CD4-positive, alpha-beta T cell (primary cell): ENCODE measurements at regions of chr20 and their contacts with region 1.

Region 1: GRCh38 chr20:17968366-17969279 is at the starts of genes MGME1 and SNX5:
- DNase-seq: peak; percentile 96 to 100 (median 98)
- ATAC-seq: peak; percentile 91
- H3K4me3 ChIP-seq: peak within 1 kb of the TSS; percentile 69
- H3K4me3 Mint-ChIP-seq: peak within 1 kb of the TSS; percentile 97
- H3K27ac ChIP-seq: peak within 1 kb of the TSS; percentile 92 to 99
- H3K27ac Mint-ChIP-seq: peak within 1 kb of the TSS; percentile 92
- H3K4me1 ChIP-seq: peaks cover 46% of the 10 kb centered on the region
- H3K4me1 Mint-ChIP-seq: peaks cover 82% of the 10 kb centered on the region
- H3K27me3 ChIP-seq: no peaks in the 10 kb centered on the region
- H3K27me3 Mint-ChIP-seq: no peaks in the 10 kb centered on the region
- CTCF ChIP-seq: no peak
- total RNA-seq, gene MGME1: 4.5 to 4.6 TPM
- total RNA-seq, gene SNX5: 58.3 to 60.3 TPM

Region 2: DNA sequence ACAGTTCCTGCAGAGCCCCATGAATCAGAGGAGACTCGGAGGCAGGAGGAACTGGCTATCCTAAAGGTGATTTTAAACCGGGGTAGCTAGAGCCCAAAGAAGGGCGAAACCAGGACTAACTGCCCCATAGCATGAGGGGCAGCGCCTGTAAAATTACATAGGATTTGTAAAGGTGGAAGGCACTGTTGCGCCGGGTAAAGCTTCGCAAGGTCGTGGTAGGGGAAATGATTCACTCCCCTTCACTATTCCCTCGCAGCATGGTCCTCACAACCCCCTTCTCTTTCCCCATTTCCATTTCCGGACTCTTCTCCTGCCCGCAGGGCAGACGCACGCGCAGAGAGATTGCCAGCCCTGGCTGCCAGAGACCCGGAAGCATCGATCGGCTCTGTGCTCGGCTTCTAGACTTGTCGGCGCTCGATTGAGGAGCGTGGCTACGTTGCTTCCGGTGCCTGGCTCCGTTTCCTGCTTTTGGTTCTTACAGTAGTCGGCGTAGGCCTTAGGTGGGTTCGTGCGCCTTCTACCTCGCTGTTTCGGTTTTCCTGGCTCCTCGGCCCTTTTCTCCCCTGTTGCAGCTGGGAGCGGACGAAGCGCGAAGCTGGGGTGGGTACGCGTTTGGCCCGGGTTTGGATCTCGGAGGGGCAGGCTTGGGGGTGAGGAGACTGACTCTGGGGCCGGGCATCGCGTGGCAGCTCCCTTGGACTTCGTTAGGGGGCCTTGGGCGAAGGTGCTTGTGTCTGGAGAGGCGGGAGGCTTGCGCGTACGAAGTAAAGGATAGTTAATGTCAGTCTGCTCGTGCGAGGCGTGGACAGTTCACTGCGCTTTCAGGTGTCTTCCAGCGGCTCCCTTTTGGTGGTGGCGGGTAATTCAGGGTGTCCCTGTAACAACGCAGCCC is 1238.8 kb before region 1 on chr20 and contains the start of gene SNRPB2:
- CTCF ChIA-PET with region 1: no interaction called
- POLR2A ChIA-PET with region 1: no interaction called
- intact Hi-C with region 1: loop called in 1 of 2 experiments (anchors 5 kb)
- DNase-seq: peak; percentile 85 to 96 (median 88)
- ATAC-seq: peak; percentile 96
- H3K4me3 ChIP-seq: peak within 1 kb of the TSS; percentile 93
- H3K4me3 Mint-ChIP-seq: peak within 1 kb of the TSS; percentile 99
- H3K27ac ChIP-seq: peak within 1 kb of the TSS; percentile 81 to 92
- H3K27ac Mint-ChIP-seq: peak within 1 kb of the TSS; percentile 96
- H3K4me1 ChIP-seq: peaks cover 29% of the 10 kb centered on the region
- H3K4me1 Mint-ChIP-seq: peaks cover 57% of the 10 kb centered on the region
- H3K27me3 ChIP-seq: peaks cover 6 to 16% of the 10 kb centered on the region in 2 experiments
- H3K27me3 Mint-ChIP-seq: peaks cover 26% of the 10 kb centered on the region
- CTCF ChIP-seq: no peak
- total RNA-seq, gene SNRPB2: 49.6 to 50.4 TPM

Region 3: DNA sequence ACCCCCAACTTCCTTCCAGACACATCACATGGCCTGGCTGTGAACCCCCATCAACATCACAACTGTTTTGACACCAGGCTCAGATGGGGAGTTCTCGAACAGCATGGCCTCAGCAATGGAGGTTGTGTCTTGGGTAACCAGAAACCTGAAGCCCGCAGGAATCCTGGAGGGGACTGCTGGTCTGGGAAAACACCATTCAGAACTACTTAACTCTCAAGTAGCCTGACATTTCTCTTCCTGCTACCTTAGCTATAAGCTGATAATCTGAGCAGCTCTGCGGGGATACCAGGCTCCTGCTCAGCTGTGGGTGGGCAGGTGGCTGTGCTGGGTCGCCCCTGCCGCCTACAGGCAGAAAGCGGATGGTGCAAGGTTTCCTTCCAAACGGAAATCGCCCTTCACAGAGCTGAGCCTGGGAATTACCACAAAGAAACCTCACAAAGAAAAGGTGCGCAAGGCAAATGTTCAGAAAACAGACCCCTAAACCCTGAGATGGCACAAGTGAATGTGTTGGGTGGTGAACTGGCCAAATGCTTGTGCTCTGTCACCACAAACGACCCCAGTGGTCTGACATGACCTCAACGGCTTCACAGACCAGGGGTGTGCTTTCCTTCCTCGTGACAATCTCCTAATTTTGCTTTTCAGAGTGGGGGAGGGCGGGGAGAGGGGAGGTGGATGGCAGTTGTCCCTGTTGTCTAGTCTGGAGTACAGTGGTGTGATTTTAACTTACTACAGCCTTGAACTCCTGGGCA is 29.6 kb before region 1 on chr20:
- CTCF ChIA-PET with region 1: interaction called, 6 read pairs
- POLR2A ChIA-PET with region 1: interaction called, 11 read pairs
- intact Hi-C with region 1: no loop called
- DNase-seq: peak; percentile 20 to 76 (median 37)
- ATAC-seq: peak; percentile 97
- H3K4me3 ChIP-seq: no peak overlapping the region
- H3K4me3 Mint-ChIP-seq: no peak overlapping the region
- H3K27ac ChIP-seq: no peak overlapping the region
- H3K27ac Mint-ChIP-seq: peak overlapping the region; percentile 35
- H3K4me1 ChIP-seq: peaks cover 12% of the 10 kb centered on the region
- H3K4me1 Mint-ChIP-seq: peaks cover 11% of the 10 kb centered on the region
- H3K27me3 ChIP-seq: no peaks in the 10 kb centered on the region
- H3K27me3 Mint-ChIP-seq: no peaks in the 10 kb centered on the region
- CTCF ChIP-seq: peak; percentile 78

Region 4: GRCh38 chr20:17995967-17996819 is 27.6 kb after region 1 on chr20:
- CTCF ChIA-PET with region 1: interaction called, 14 read pairs
- POLR2A ChIA-PET with region 1: interaction called, 3 read pairs
- intact Hi-C with region 1: loop called in 1 of 2 experiments (anchors 1 kb)
- DNase-seq: peak in 11 of 14 experiments; percentile 8 to 80 (median 22)
- ATAC-seq: peak; percentile 97
- H3K4me3 ChIP-seq: no peak overlapping the region
- H3K4me3 Mint-ChIP-seq: no peak overlapping the region
- H3K27ac ChIP-seq: no peak overlapping the region
- H3K27ac Mint-ChIP-seq: no peak overlapping the region
- H3K4me1 ChIP-seq: peaks cover 7% of the 10 kb centered on the region
- H3K4me1 Mint-ChIP-seq: peaks cover 22% of the 10 kb centered on the region
- H3K27me3 ChIP-seq: peaks cover 0 to 2% of the 10 kb centered on the region in 2 experiments
- H3K27me3 Mint-ChIP-seq: no peaks in the 10 kb centered on the region
- CTCF ChIP-seq: peak; percentile 88

Region 5: GRCh38 chr20:18466894-18467730 is 498.5 kb after region 1 on chr20 and contains the starts of genes DZANK1 and POLR3F:
- CTCF ChIA-PET with region 1: no interaction called
- POLR2A ChIA-PET with region 1: interaction called, 5 read pairs
- intact Hi-C with region 1: loop called in 1 of 2 experiments (anchors 5 kb)
- DNase-seq: peak; percentile 84 to 96 (median 90)
- ATAC-seq: peak; percentile 89
- H3K4me3 ChIP-seq: peak within 1 kb of the TSS; percentile 95
- H3K4me3 Mint-ChIP-seq: peak within 1 kb of the TSS; percentile 96
- H3K27ac ChIP-seq: peak within 1 kb of the TSS; percentile 77 to 91
- H3K27ac Mint-ChIP-seq: peak within 1 kb of the TSS; percentile 96
- H3K4me1 ChIP-seq: peaks cover 17% of the 10 kb centered on the region
- H3K4me1 Mint-ChIP-seq: peaks cover 39% of the 10 kb centered on the region
- H3K27me3 ChIP-seq: no peaks in the 10 kb centered on the region
- H3K27me3 Mint-ChIP-seq: no peaks in the 10 kb centered on the region
- CTCF ChIP-seq: no peak
- total RNA-seq, gene DZANK1: 1.8 to 1.9 TPM
- total RNA-seq, gene POLR3F: 7.9 to 8.8 TPM

Region 6: DNA sequence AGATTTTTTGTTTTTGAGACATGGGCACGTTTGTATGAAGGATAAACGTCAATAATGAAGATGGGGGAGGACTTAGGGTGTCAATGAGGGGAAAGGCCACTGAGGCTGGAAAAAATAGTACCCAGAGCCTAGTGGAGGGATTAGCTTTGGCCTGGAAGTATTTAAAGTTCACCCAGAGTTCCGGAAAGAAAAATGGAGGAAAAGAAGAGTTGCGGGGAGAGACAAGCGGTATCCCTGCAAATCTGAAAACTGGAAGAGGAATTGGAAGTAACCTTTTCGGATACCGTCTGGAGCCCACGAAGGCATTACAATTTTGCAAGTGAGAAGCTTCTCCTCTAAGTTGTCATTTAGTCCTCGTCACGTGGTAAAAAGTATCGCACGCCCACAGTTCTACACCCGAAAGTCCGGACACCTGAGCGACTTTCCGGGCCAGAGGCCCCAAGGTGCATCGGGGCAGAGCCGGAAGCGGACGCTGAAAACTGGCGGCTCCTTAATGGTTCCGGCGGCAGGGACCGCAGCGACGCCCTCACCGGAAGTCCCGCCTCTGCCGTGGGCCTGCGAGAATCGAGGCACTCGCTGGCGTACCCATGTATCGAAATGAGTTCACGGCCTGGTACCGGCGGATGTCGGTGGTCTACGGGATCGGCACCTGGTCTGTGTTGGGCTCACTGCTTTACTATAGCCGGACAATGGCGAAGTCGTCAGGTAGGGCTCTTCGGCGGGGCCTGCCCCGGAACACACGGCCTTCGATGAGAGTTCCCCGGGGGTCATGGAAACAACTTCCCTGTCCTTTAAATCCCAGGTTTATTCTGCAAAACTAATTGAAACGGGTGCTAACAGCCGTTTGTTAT is 598.5 kb after region 1 on chr20 and contains the start of gene SMIM26:
- CTCF ChIA-PET with region 1: no interaction called
- POLR2A ChIA-PET with region 1: interaction called, 4 read pairs
- intact Hi-C with region 1: loop called in 1 of 2 experiments (anchors 5 kb)
- DNase-seq: peak; percentile 90 to 97 (median 94)
- ATAC-seq: peak; percentile 99
- H3K4me3 ChIP-seq: peak within 1 kb of the TSS; percentile 91
- H3K4me3 Mint-ChIP-seq: peak within 1 kb of the TSS; percentile 99
- H3K27ac ChIP-seq: peak within 1 kb of the TSS; percentile 82 to 94
- H3K27ac Mint-ChIP-seq: peak within 1 kb of the TSS; percentile 100
- H3K4me1 ChIP-seq: peaks cover 20% of the 10 kb centered on the region
- H3K4me1 Mint-ChIP-seq: peaks cover 28% of the 10 kb centered on the region
- H3K27me3 ChIP-seq: no peaks in the 10 kb centered on the region
- H3K27me3 Mint-ChIP-seq: no peaks in the 10 kb centered on the region
- CTCF ChIP-seq: no peak
- total RNA-seq, gene SMIM26: 78.7 to 79.8 TPM